GM13977 (cell line): ENCODE measurements at regions of chr6 and their contacts with region 1.

Region 1: DNA sequence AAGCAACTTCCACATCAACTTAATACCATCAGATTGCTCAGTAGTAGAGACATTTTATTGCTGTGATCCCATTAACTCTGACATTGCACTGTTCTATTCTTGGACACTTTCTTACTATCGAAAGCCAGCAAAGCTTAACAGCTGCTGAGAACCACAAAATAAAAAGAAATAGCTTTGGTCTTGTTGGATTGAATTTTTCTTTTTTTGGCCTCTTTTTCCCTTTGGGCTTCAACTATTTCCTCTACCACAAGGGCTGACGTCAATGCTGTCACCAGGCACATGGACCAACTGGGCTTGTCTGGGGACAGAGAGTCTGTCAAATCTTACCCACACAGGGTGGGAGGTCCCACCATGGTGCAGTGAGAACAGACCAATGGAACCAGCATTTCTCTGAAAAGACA is 63.4 kb upstream of the ENPP5 start:
- DNase-seq: no peak
- CTCF ChIP-seq: no peak

Region 2: GRCh38 chr6:45741437-45742171 is 492.6 kb before region 1 on chr6:
- in situ Hi-C with region 1: no loop called
- DNase-seq: peak; percentile 12
- CTCF ChIP-seq: no peak

Region 3: GRCh38 chr6:46419576-46420002 is 185.4 kb after region 1 on chr6:
- in situ Hi-C with region 1: loop called (anchors 10 kb)
- DNase-seq: peak; percentile 34
- CTCF ChIP-seq: peak; percentile 73